Gastrocnemius medialis (tissue), 4 donors: ENCODE measurements at regions of chr7 and their contacts with region 1.

Region 1: GRCh38 chr7:1512781-1513656 is 8.8 kb upstream of the INTS1 start:
- DNase-seq: peak; percentile 92 to 96
- ATAC-seq: peak; percentile 95 to 96
- H3K4me3 ChIP-seq: peak overlapping the region; percentile 40 to 48 (median 42)
- H3K27ac ChIP-seq: peak overlapping the region; percentile 98 to 100 (median 100)
- H3K4me1 ChIP-seq: peaks cover 10 to 21% of the 10 kb centered on the region in 2 donors
- H3K27me3 ChIP-seq: no peaks in the 10 kb centered on the region
- CTCF ChIP-seq: no peak
- POLR2A ChIP-seq: peak; percentile 62 to 67

Region 2: DNA sequence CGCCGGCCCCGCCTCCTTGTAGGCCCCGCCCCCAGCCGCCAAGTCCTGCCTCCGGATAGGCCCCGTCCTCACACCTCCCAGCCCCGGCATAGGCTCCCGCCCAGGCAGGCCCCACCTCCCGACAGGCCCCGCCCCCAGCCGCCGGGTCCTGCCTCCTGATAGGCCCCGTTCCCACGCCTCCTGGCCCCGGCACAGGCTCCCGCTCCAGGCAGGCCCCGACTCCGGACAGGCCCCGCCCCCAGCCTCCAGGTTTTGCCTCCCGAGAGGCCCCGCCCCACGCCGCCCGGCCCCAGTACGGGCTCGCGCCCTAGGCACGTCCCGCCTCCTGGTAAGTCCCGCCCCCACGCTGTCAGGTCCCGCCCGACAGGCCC is 53.5 kb before region 1 on chr7:
- in situ Hi-C with region 1: no loop called
- intact Hi-C with region 1: no loop called
- DNase-seq: peak; percentile 99 to 100
- ATAC-seq: peak; percentile 82
- H3K4me3 ChIP-seq: peak overlapping the region; percentile 66 to 91 (median 70)
- H3K27ac ChIP-seq: peak overlapping the region; percentile 84 to 90 (median 88)
- H3K4me1 ChIP-seq: peaks cover 23 to 27% of the 10 kb centered on the region in 2 donors
- H3K27me3 ChIP-seq: no peaks in the 10 kb centered on the region
- CTCF ChIP-seq: no peak
- POLR2A ChIP-seq: no peak

Region 3: DNA sequence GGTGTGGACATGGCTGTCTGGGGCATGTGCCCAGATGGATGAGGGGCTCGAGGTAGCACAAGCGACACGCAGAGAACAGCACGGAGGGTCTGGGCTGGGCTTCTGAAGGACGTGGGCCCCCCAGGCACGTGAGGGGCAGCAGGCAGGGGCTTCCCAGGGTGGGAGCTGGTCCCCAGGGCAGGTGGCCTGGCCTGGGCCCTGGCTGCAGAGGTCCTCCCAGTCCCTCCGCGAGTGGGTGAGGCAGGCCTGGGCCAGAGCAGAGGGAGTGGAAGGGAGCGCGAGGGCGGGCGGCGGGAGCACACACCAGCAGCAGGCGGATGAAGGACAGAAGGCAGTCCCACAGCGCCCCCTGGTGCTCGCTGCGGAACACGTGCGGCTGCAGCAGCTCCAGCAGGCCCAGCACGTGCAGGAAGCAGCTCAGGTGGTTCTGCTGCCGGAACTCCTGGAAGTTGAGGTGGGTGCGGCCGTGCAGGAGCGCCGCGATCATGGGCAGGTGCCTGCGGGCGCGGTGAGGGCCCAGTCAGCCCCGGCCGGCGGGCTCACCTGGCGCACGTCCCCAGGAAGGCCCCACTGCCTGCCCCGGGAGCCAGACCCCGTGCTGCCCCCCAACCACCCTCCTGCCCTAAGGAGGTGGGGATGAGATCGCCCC is 39.0 kb before region 1 on chr7:
- in situ Hi-C with region 1: no loop called
- intact Hi-C with region 1: no loop called
- DNase-seq: peak; percentile 56 to 77
- ATAC-seq: peak; percentile 58 to 88
- H3K4me3 ChIP-seq: no peak overlapping the region
- H3K27ac ChIP-seq: no peak overlapping the region
- H3K4me1 ChIP-seq: no peaks in the 10 kb centered on the region
- H3K27me3 ChIP-seq: no peaks in the 10 kb centered on the region
- CTCF ChIP-seq: peak; percentile 68 to 93 (median 86)
- POLR2A ChIP-seq: no peak

Region 4: GRCh38 chr7:1532483-1533424 is 19.7 kb after region 1 on chr7:
- in situ Hi-C with region 1: no loop called
- intact Hi-C with region 1: loop called (anchors 1 kb)
- DNase-seq: peak; percentile 81 to 83
- ATAC-seq: peak; percentile 48 to 55
- H3K4me3 ChIP-seq: peak overlapping the region; percentile 65 to 78 (median 70)
- H3K27ac ChIP-seq: peak overlapping the region; percentile 98 to 100 (median 99)
- H3K4me1 ChIP-seq: peaks cover 52 to 53% of the 10 kb centered on the region in 2 donors
- H3K27me3 ChIP-seq: no peaks in the 10 kb centered on the region
- CTCF ChIP-seq: no peak
- POLR2A ChIP-seq: peak; percentile 61 to 83

Region 5: GRCh38 chr7:1555809-1556540 is 43.0 kb after region 1 on chr7 and contains the start of gene TMEM184A:
- in situ Hi-C with region 1: no loop called
- intact Hi-C with region 1: loop called (anchors 2 kb)
- DNase-seq: peak; percentile 78 to 90
- ATAC-seq: peak; percentile 70 to 79
- H3K4me3 ChIP-seq: peak within 1 kb of the TSS in 1 of 4 donors; percentile 10
- H3K27ac ChIP-seq: peak within 1 kb of the TSS; percentile 75 to 90 (median 84)
- H3K4me1 ChIP-seq: peaks cover 12 to 17% of the 10 kb centered on the region in 2 donors
- H3K27me3 ChIP-seq: no peaks in the 10 kb centered on the region
- CTCF ChIP-seq: peak; percentile 49 to 74 (median 67)
- POLR2A ChIP-seq: no peak
- total RNA-seq, gene TMEM184A: 0.55 to 3.3 (median 1.3) TPM

Region 6: DNA sequence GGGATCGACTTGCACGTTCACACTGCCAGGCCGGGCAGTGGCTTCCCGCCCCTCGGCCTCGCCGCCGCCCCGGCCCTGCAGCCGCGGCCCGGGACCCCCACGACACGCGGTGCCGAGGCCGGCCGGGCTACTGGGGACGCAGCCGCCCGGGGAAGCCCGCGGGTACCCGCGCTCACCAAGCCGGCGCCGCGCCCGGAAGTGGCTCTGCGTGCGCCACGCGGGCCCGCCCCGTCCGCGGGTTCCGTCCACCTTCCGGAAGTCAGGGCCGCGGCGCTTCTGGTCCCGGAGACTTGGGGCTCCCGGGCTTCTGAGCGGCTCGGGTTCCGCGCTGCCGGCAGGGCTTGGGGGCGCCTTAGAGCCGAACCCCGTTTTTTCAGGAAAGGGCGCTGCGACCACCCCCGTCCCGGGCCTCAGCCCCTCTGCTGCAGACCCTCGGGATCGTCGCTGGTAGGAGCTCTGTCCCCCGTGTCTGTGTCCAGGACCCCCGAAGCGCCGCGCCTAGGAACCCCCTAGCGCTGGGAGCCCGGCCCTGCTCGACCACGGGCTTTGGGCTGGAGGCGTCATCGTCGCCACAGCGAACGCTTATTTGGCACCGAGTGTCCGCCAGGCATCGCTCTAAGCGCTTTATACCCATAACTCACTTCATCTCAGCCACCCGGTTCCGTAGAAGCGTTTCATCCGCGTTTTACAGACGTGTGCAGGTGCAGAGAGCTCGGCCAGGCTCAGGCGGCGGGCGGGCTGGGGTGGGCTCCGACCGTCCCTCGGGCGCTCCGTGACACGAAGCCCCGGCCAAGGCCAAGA is 57.0 kb after region 1 on chr7 and contains the start of gene PSMG3:
- in situ Hi-C with region 1: loop called in 1 of 4 experiments (anchors 5 kb)
- intact Hi-C with region 1: no loop called
- DNase-seq: peak; percentile 86 to 87
- ATAC-seq: peak; percentile 83 to 84
- H3K4me3 ChIP-seq: peak within 1 kb of the TSS; percentile 77 to 98 (median 90)
- H3K27ac ChIP-seq: peak within 1 kb of the TSS; percentile 93 to 99 (median 94)
- H3K4me1 ChIP-seq: peaks cover 26 to 42% of the 10 kb centered on the region in 2 donors
- H3K27me3 ChIP-seq: no peaks in the 10 kb centered on the region
- CTCF ChIP-seq: peak; percentile 28 to 53 (median 37)
- POLR2A ChIP-seq: peak; percentile 82 to 85
- total RNA-seq, gene PSMG3: 25.4 to 46.4 (median 32.2) TPM